Common myeloid progenitor, CD34-positive (primary cell): ENCODE measurements at regions of chr1 and their contacts with region 1.

Region 1: GRCh38 chr1:36516372-36517325 is 33.9 kb upstream of the CSF3R start:
- DNase-seq: peak; percentile 50 to 75 (median 73)
- H3K4me3 ChIP-seq: no peak overlapping the region
- H3K27ac ChIP-seq: no peak overlapping the region
- H3K4me1 ChIP-seq: peaks cover 0 to 28% (median 0%) of the 10 kb centered on the region in 4 experiments
- H3K27me3 ChIP-seq: no peaks in the 10 kb centered on the region

Region 2: GRCh38 chr1:36482710-36483393 is 33.8 kb before region 1 on chr1 and contains the start of gene CSF3R:
- CTCF ChIA-PET with region 1: interaction called, 17 read pairs
- POLR2A ChIA-PET with region 1: no interaction called
- DNase-seq: peak; percentile 55 to 87 (median 80)
- H3K4me3 ChIP-seq: peak within 1 kb of the TSS; percentile 18 to 81 (median 70)
- H3K27ac ChIP-seq: peak within 1 kb of the TSS; percentile 74 to 81
- H3K4me1 ChIP-seq: peaks cover 7 to 63% (median 43%) of the 10 kb centered on the region in 4 experiments
- H3K27me3 ChIP-seq: no peaks in the 10 kb centered on the region

Region 3: DNA sequence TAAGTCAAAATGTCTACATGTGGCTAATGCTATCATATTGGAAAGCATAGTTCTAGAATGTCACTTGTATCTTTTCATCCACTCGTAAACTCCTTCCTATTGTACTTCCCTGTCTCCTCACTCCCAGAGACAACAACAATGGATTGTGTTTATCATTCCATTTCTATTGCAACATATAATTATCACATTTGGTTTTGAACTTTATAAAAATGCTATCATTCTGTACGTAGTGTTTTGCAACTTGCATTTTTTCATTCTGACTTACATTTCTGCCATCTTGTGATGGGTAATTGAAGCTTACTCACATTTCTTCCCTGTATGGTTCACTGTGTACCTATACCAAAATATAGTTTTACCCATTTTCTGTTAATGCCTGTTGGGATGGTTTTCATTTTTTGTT is 19.4 kb before region 1 on chr1:
- CTCF ChIA-PET with region 1: interaction called, 10 read pairs
- POLR2A ChIA-PET with region 1: no interaction called
- DNase-seq: no peak
- H3K4me3 ChIP-seq: no peak overlapping the region
- H3K27ac ChIP-seq: no peak overlapping the region
- H3K4me1 ChIP-seq: peaks cover 0 to 12% (median 10%) of the 10 kb centered on the region in 4 experiments
- H3K27me3 ChIP-seq: no peaks in the 10 kb centered on the region

Region 4: DNA sequence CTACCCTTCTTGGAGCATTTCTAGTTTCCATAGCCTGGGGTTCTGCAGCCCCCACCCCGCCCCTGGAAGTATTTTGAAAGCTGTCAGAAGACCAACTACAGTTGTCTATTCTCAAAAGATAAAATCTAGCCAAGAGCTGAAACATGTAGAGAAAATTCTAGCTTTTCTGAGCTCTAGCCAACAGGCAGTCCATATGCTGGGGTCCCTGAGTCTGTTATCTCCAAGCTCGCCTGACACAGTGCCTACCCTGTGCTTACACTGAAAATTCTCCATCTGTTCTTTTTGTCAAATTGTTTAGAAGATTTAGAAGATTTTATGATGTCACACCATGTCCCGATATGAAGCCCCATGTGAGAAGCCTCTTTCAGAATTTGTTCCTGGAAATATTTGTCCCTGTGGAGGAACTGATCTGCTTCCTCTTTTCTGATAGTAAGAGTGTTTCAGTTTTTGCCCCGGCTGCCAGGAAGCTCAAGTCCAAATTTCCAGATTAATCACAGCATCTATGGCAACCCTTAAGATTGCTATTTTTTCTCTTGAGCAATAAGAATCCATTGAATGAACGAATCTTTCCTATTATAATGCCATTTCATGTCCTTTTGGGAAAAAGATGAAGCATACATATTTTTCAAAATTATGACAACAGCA is 10.3 kb before region 1 on chr1:
- CTCF ChIA-PET with region 1: interaction called, 18 read pairs
- POLR2A ChIA-PET with region 1: no interaction called
- DNase-seq: no peak
- H3K4me3 ChIP-seq: no peak overlapping the region
- H3K27ac ChIP-seq: no peak overlapping the region
- H3K4me1 ChIP-seq: peaks cover 0 to 5% (median 0%) of the 10 kb centered on the region in 4 experiments
- H3K27me3 ChIP-seq: no peaks in the 10 kb centered on the region

Region 5: DNA sequence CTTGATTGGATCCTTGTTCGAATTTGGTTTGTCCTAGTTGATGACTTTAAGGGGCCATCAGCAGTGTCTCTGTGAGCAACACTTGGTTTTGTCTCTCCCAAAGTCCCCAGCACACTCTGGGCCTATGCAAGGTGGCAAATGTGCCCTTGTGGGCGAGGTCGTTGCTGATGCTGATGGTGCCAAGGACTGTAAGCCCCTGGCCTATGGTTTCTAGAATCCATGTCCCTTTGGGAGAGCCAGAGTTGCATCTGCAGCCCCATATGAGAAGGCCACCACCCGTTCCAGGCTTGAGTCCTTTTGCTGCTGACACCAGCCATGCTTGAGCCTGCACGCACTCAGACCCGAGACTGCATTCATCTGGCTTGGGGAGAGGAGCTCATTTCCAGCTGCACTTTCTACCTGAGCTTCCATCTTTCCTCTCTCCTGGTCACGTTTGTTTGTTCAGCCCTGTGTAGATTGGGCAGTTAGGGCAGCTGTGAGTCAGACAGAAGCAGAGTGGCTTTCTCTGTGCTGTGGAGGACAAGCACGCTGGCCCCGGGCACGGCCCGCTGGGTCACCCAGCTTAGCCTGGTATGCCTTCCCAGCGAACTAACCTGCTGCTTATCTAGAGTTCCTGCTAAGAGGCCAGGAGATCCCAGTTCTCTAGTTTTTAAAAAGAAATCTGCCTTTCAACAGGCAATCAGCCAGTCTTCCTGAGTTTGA is 18.2 kb after region 1 on chr1:
- CTCF ChIA-PET with region 1: interaction called, 16 read pairs
- POLR2A ChIA-PET with region 1: no interaction called
- DNase-seq: no peak
- H3K4me3 ChIP-seq: no peak overlapping the region
- H3K27ac ChIP-seq: no peak overlapping the region
- H3K4me1 ChIP-seq: no peaks in the 10 kb centered on the region
- H3K27me3 ChIP-seq: peaks cover 0 to 7% (median 0%) of the 10 kb centered on the region in 5 experiments